ENCODE measurements at regions of chr6 and their contacts with region 1.

Region 1: DNA sequence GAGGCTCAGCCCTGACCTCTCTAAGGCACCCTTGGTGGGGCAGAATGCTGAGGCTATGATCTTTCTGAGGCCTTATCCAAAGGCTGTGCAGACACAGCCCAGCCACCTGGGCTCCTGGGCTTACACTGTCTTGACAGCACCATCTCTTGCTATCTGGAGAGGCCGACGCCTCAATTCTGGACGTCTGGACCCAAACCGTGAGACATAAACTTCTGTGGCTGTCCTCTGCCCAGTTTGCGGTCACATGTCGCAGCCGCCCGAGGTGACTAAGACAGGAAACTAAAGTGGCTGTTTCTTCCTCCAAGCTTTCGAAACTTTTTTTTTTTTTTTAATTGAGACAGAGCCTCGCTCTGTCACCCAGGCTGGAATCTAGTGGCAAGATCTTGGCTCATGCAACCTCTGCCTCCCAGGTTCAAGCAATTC is 49.3 kb downstream of the PRR18 start:
- DNase-seq: peak; percentile 34 to 61
- ATAC-seq: peak; percentile 60 to 75 (median 72)
- H3K4me3 ChIP-seq: no peak overlapping the region
- H3K4me3 Mint-ChIP-seq: peak overlapping the region; percentile 87
- H3K27ac ChIP-seq: peak overlapping the region; percentile 77
- H3K27ac Mint-ChIP-seq: peak overlapping the region; percentile 88 to 95
- H3K4me1 ChIP-seq: peaks cover 32% of the 10 kb centered on the region
- H3K4me1 Mint-ChIP-seq: peaks cover 31 to 33% of the 10 kb centered on the region in 2 donors
- H3K27me3 ChIP-seq: peaks cover 5% of the 10 kb centered on the region
- H3K27me3 Mint-ChIP-seq: peaks cover 16 to 21% of the 10 kb centered on the region in 2 donors
- CTCF ChIP-seq: no peak

Region 2: GRCh38 chr6:166244353-166245045 is 14.4 kb before region 1 on chr6:
- intact Hi-C with region 1: loop called (anchors 1 kb)
- DNase-seq: peak; percentile 44 to 64
- ATAC-seq: peak; percentile 89 to 96 (median 92)
- H3K4me3 ChIP-seq: peak overlapping the region; percentile 12
- H3K4me3 Mint-ChIP-seq: peak overlapping the region; percentile 82
- H3K27ac ChIP-seq: peak overlapping the region; percentile 65
- H3K27ac Mint-ChIP-seq: peak overlapping the region; percentile 76 to 86
- H3K4me1 ChIP-seq: peaks cover 43% of the 10 kb centered on the region
- H3K4me1 Mint-ChIP-seq: peaks cover 26 to 29% of the 10 kb centered on the region in 2 donors
- H3K27me3 ChIP-seq: peaks cover 4% of the 10 kb centered on the region
- H3K27me3 Mint-ChIP-seq: peaks cover 11 to 18% of the 10 kb centered on the region in 2 donors
- CTCF ChIP-seq: no peak

Region 3: GRCh38 chr6:166325383-166326042 is 66.6 kb after region 1 on chr6:
- intact Hi-C with region 1: no loop called
- DNase-seq: no peak
- ATAC-seq: peak; percentile 72 to 92 (median 89)
- H3K4me3 ChIP-seq: no peak overlapping the region
- H3K4me3 Mint-ChIP-seq: peak overlapping the region; percentile 49
- H3K27ac ChIP-seq: peak overlapping the region; percentile 8
- H3K27ac Mint-ChIP-seq: peak overlapping the region; percentile 72 to 81
- H3K4me1 ChIP-seq: peaks cover 14% of the 10 kb centered on the region
- H3K4me1 Mint-ChIP-seq: peaks cover 44 to 49% of the 10 kb centered on the region in 2 donors
- H3K27me3 ChIP-seq: no peaks in the 10 kb centered on the region
- H3K27me3 Mint-ChIP-seq: no peaks in the 10 kb centered on the region
- CTCF ChIP-seq: no peak

Region 4: GRCh38 chr6:166342349-166343149 is 83.7 kb after region 1 on chr6 and contains the start of gene SFT2D1:
- intact Hi-C with region 1: loop called (anchors 5 kb)
- DNase-seq: peak; percentile 79 to 90
- ATAC-seq: peak; percentile 76 to 89 (median 86)
- H3K4me3 ChIP-seq: peak within 1 kb of the TSS; percentile 96
- H3K4me3 Mint-ChIP-seq: peak within 1 kb of the TSS; percentile 97
- H3K27ac ChIP-seq: peak within 1 kb of the TSS; percentile 99
- H3K27ac Mint-ChIP-seq: peak within 1 kb of the TSS; percentile 93 to 97
- H3K4me1 ChIP-seq: peaks cover 40% of the 10 kb centered on the region
- H3K4me1 Mint-ChIP-seq: peaks cover 18 to 19% of the 10 kb centered on the region in 2 donors
- H3K27me3 ChIP-seq: no peaks in the 10 kb centered on the region
- H3K27me3 Mint-ChIP-seq: peaks cover 3 to 7% of the 10 kb centered on the region in 2 donors
- CTCF ChIP-seq: no peak
- total RNA-seq, gene SFT2D1: 32.8 to 44.7 (median 33.5) TPM

Region 5: DNA sequence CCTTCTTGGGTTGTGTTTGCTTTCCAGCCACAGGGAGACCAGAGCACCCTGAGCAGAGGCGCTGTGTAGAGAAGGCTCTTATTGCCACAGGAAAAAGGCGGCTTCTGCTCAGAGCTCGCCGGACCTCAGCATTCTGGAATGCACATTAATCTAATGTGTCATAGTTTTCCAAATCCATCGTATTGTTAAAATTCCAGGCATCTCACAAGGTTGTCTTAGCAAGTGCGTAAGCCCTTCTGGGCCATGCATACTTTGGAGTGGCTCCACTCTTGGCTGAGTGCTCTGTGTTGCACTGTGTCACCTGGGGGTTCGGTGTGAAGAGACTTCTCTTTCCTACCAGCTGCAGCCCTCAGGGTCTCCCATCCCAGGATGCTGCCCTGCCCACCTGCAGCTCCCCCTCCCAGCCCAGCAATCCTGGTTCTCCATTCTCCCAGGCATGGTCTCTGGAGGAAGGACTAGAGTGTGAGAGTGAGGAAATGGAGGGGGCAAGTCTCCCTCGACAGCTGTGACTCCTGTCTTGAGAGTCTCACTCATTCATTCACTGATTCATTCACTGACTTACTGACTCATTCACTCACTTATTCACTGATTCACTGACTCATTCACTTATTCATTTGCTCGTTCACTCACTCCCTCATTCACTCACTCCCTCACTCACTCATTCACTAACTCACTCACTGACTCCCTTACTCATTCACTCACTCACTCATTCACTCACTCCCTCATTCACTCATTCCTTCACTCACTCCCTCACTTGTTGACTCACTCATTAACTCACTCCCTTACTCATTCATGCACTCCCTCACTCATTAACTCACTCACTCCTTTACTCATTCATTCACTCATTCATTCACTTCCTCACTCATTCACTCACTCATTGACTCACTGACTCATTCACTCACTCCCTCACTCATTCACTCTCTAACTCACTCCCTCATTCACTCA is 207.6 kb after region 1 on chr6:
- intact Hi-C with region 1: no loop called
- DNase-seq: no peak
- ATAC-seq: peak in 1 of 3 donors; percentile 12
- H3K4me3 ChIP-seq: no peak overlapping the region
- H3K4me3 Mint-ChIP-seq: no peak overlapping the region
- H3K27ac ChIP-seq: no peak overlapping the region
- H3K27ac Mint-ChIP-seq: no peak overlapping the region
- H3K4me1 ChIP-seq: peaks cover 12% of the 10 kb centered on the region
- H3K4me1 Mint-ChIP-seq: peaks cover 12 to 20% of the 10 kb centered on the region in 2 donors
- H3K27me3 ChIP-seq: peaks cover 3% of the 10 kb centered on the region
- H3K27me3 Mint-ChIP-seq: peaks cover 28 to 37% of the 10 kb centered on the region in 2 donors
- CTCF ChIP-seq: no peak